Esophagus muscularis mucosa (tissue), 4 donors: ENCODE measurements at regions of chr19 and their contacts with region 1.

Region 1: DNA sequence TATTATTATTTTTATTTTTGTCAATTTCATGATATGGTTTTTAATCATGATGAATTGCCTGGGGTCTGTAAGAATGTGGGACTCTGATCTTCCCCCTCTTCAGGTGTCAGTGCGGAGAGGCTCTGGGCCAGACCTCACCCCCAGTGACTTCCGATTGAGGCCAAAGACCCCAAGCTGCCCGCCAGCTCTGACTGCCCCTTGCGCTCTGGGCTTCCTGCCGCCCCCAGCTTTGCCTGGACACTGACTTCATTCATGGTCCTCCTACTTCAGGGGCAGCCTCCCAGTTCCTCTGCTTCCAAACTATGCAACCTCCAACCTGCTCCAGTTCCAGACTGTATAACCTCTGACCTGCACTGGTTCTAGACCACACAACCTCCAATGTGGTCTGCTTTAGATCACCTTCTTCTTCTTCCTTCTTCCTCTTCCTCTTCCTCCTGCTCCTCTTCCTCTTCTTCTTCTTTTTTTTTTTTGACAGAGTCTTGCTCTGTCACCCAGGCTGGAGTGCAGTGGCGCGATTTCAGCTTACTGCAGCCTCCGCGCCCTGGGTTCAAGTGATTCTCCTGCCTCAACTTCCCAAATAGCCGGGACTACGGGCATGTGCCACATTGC is 6.7 kb upstream of the PPP5C start:
- DNase-seq: no peak
- H3K4me3 ChIP-seq: no peak overlapping the region
- H3K27ac ChIP-seq: peak overlapping the region in 1 of 4 donors; percentile 30
- H3K4me1 ChIP-seq: no peaks in the 10 kb centered on the region
- H3K27me3 ChIP-seq: no peaks in the 10 kb centered on the region
- CTCF ChIP-seq: no peak
- EP300 ChIP-seq: no peak
- POLR2A ChIP-seq: no peak

Region 2: DNA sequence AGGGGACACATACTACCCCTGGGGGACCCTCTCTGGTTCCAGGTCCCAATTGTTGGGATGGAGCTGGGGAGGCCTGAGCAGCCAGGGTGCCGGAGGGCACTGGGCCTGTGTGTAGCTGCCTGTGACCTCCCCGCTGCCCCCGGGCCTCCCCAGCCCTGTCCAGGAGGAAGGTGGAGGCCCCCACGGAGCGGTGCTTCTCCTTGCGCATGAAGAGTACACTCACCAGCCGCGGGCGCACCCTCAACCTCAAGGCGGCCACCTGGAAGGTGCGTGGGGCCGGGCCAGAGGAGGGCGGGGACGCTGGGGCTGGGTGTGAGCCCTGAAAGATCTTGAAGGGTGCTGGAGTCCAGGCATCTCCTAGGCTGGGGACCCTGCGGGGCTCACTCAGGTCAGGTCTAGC is 31.6 kb before region 1 on chr19:
- intact Hi-C with region 1: loop called (anchors 5 kb)
- DNase-seq: no peak
- H3K4me3 ChIP-seq: no peak overlapping the region
- H3K27ac ChIP-seq: peak overlapping the region; percentile 48 to 97 (median 53)
- H3K4me1 ChIP-seq: peaks cover 11 to 79% (median 64%) of the 10 kb centered on the region in 4 donors
- H3K27me3 ChIP-seq: no peaks in the 10 kb centered on the region
- CTCF ChIP-seq: no peak
- EP300 ChIP-seq: no peak
- POLR2A ChIP-seq: no peak

Region 3: GRCh38 chr19:46413262-46414031 is 73.3 kb after region 1 on chr19 and contains the start of gene CCDC8:
- intact Hi-C with region 1: no loop called
- DNase-seq: no peak
- H3K4me3 ChIP-seq: peak within 1 kb of the TSS; percentile 48 to 58 (median 52)
- H3K27ac ChIP-seq: peak within 1 kb of the TSS; percentile 38 to 73 (median 58)
- H3K4me1 ChIP-seq: peaks cover 16 to 70% (median 60%) of the 10 kb centered on the region in 4 donors
- H3K27me3 ChIP-seq: peaks cover 0 to 82% (median 18%) of the 10 kb centered on the region in 4 donors
- CTCF ChIP-seq: no peak
- EP300 ChIP-seq: no peak
- POLR2A ChIP-seq: no peak
- total RNA-seq, gene CCDC8: 4.5 to 11.6 (median 4.9) TPM